Dendritic cell treated with granulocyte-macrophage colony-stimulating factor and Interleukin-4, amounts not matched to agents 40 ng/mL and 50 ng/mL, for 4 days (primary cell): ENCODE measurements at regions of chr1 and their contacts with region 1.

Region 1: GRCh38 chr1:47333922-47334764 is 553 bp downstream of the CMPK1 start:
- H3K4me3 Mint-ChIP-seq: no peak overlapping the region
- H3K27ac Mint-ChIP-seq: no peak overlapping the region
- H3K4me1 Mint-ChIP-seq: peaks cover 23% of the 10 kb centered on the region
- H3K27me3 Mint-ChIP-seq: no peaks in the 10 kb centered on the region

Region 2: DNA sequence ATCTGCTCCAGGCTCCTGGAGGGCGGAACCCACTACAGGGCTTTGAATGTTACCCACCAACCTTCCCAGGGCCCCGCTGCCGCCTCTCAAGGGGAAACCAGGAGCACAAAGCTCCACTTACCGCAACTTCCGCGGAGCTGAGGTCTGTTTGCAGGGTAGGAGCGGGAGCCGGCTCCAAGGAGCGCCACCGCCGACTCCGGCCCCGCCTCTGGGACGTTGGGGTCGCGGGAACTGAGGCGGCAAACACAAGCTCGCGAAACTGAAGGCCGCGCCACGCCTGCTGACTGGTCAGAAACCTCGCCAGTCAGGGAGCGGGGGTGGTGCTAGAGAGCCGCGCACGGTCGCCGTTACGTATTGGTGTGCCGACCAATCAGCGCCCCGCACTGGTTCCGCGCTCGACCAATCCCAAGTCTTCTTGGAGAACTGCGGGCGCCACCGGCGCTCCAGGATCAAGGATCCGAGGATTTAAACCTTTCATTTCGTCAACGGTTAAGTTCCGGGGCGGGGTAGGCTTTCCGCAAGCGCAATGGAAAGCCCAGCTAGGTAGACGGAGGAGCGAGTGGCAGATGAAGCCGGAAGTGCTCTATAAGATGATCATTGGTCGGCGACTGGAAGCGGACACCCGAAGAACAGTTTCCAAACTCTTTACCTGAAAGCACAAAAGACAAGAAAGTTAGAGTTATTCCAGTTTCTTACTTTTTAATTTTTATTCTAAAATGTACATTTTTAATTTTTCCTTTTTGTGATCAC is 20.1 kb before region 1 on chr1 and contains the start of gene STIL:
- intact Hi-C with region 1: loop called (anchors 1 kb)
- H3K4me3 Mint-ChIP-seq: peak within 1 kb of the TSS; percentile 85
- H3K27ac Mint-ChIP-seq: peak within 1 kb of the TSS; percentile 96
- H3K4me1 Mint-ChIP-seq: peaks cover 10% of the 10 kb centered on the region
- H3K27me3 Mint-ChIP-seq: no peaks in the 10 kb centered on the region

Region 3: GRCh38 chr1:47437447-47438164 is 103.5 kb after region 1 on chr1 and contains the start of gene FOXD2:
- intact Hi-C with region 1: loop called (anchors 10 kb)
- H3K4me3 Mint-ChIP-seq: peak within 1 kb of the TSS; percentile 95
- H3K27ac Mint-ChIP-seq: peak within 1 kb of the TSS; percentile 89
- H3K4me1 Mint-ChIP-seq: peaks cover 42% of the 10 kb centered on the region
- H3K27me3 Mint-ChIP-seq: peaks cover 44% of the 10 kb centered on the region